ENCODE measurements at regions of chr10 and their contacts with region 1.

Region 1: GRCh38 chr10:103416436-103417147 is 20.2 kb downstream of the PDCD11 start:
- DNase-seq: peak; percentile 44 to 70
- ATAC-seq: peak; percentile 78 to 85; a peak in 4 of 6 replicates
- H3K4me3 ChIP-seq: no peak overlapping the region
- H3K27ac ChIP-seq: no peak overlapping the region
- H3K4me1 ChIP-seq: no peaks in the 10 kb centered on the region
- CTCF ChIP-seq: peak; percentile 74
- EP300 ChIP-seq: no peak
- POLR2A ChIP-seq: no peak
- RAD21 ChIP-seq: peak; percentile 64 to 70

Region 2: DNA sequence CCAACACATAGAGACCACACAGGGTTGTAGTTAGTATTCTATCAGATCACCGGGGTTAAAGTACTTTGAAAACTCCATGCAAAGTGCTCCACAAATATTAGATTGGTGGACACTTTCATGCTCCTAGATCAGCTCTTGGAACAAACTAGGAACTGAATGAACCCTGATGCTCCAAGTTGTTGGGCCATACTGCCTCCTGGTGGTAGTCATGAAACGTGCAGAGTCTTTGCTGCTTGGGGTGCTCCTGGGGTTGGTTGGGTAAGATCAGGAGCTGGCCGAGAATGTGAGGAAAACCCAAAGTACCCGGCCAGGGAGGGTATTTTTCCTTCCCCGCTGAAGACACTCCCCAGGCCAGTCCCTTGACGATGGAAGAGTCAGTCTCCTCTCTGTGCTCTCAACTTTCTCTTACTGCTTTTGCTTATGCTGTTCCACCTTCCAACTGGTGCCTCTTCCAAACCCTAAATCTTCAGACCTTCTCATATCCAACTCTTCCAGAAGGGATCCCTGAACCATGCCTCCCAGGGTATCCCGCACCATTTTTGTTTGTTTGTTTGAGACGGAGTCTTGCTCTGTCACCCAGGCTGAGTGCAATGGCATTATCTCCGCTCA is 171.8 kb before region 1 on chr10:
- CTCF ChIA-PET with region 1: no interaction called
- POLR2A ChIA-PET with region 1: no interaction called
- DNase-seq: peak; percentile 90 to 94
- ATAC-seq: peak; percentile 36 to 57; a peak in 4 of 6 replicates
- H3K4me3 ChIP-seq: no peak overlapping the region
- H3K27ac ChIP-seq: peak overlapping the region; percentile 96 to 100
- H3K4me1 ChIP-seq: peaks cover 40% of the 10 kb centered on the region
- CTCF ChIP-seq: peak; percentile 84
- EP300 ChIP-seq: no peak
- POLR2A ChIP-seq: no peak
- RAD21 ChIP-seq: peak; percentile 95 to 98

Region 3: DNA sequence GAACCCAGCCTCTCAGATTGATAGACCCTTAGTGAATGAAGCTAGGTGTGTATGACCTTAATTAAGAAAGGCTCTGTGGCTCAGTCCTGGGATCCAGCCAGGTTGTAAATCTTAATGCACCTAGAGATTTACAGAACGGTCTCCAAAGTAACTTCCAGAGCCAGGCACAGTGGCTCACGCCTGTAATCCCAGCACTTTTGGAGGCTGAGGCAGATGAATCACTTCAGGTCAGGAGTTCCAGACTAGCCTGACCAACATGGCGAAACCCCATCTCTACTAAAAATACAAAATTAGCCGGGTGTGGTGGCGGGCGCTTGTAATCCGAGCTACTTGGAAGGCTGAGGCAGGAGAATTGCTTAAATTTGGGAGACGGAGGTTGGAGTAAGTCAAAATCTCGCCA is 11.3 kb after region 1 on chr10:
- CTCF ChIA-PET with region 1: interaction called, 37 read pairs
- POLR2A ChIA-PET with region 1: no interaction called
- DNase-seq: no peak
- ATAC-seq: no peak
- H3K4me3 ChIP-seq: no peak overlapping the region
- H3K27ac ChIP-seq: no peak overlapping the region
- H3K4me1 ChIP-seq: peaks cover 7% of the 10 kb centered on the region; the same call in 2 of the 3 replicates
- CTCF ChIP-seq: no peak
- EP300 ChIP-seq: no peak
- POLR2A ChIP-seq: no peak
- RAD21 ChIP-seq: no peak

Region 4: DNA sequence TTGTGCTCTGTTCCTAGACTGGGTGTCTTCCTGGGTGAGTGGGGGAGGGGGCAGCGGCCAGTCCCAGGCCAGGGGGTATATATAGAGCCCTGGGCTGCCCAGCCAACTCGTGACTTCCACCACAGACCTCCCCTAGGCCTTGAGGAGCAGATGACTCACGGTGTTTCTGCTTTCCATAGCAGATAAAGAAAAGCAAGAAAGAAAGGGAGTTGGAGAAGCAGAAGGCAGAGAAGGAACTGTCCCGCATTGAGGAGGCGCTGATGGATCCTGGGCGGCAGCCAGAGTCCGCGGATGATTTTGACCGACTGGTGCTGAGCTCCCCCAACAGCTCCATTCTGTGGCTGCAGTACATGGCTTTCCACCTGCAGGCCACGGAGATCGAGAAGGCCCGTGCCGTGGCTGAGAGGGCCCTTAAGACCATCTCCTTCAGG is 25.5 kb after region 1 on chr10:
- CTCF ChIA-PET with region 1: interaction called, 10 read pairs
- POLR2A ChIA-PET with region 1: interaction called, 3 read pairs
- DNase-seq: no peak
- ATAC-seq: no peak
- H3K4me3 ChIP-seq: no peak overlapping the region
- H3K27ac ChIP-seq: no peak overlapping the region
- H3K4me1 ChIP-seq: no peaks in the 10 kb centered on the region
- CTCF ChIP-seq: no peak
- EP300 ChIP-seq: no peak
- POLR2A ChIP-seq: no peak
- RAD21 ChIP-seq: no peak

Region 5: DNA sequence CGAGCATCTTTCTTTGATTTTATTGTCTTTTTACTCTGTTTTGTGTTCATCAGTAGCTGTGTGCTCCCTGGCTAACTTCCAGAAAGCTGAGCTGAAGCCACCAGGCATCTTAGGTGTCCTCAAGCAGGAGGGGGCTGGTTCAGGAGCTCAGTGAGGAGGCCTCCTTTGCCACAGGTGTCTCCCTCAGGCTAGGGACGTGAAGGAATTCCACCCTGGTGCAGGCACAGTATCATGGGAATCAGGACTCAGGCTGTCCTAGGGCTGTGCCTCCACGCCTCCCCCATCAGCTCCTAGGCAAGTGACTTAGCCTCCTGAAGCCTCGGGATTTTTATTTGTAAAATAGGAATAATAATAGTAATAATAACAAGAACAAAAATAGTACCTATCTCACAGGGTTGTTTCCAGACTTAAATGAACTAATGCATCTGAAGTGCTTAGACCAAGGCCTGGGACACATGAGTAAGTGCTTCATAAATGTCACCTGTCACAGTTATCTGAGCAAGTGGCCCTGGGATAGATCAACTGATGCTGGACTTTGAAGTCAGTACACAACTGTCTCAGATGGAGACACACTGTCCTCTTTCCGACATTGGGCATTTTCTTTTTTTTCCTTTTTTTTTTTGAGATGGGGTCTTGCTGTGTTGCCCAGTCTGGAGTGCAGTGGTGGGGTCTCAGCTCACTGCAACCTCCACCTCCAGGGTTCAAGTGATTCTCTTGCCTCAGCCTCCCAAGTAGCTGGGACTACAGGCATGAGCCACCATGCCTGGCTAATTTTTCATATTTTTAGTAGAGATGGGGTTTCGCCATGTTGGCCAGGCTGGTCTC is 70.0 kb after region 1 on chr10:
- CTCF ChIA-PET with region 1: interaction called, 32 read pairs
- POLR2A ChIA-PET with region 1: no interaction called
- DNase-seq: no peak
- ATAC-seq: no peak
- H3K4me3 ChIP-seq: no peak overlapping the region
- H3K27ac ChIP-seq: no peak overlapping the region
- H3K4me1 ChIP-seq: no peaks in the 10 kb centered on the region
- CTCF ChIP-seq: no peak
- EP300 ChIP-seq: no peak
- POLR2A ChIP-seq: no peak
- RAD21 ChIP-seq: no peak

Region 6: GRCh38 chr10:103592186-103593021 is 175.8 kb after region 1 on chr10:
- CTCF ChIA-PET with region 1: interaction called, 21 read pairs
- POLR2A ChIA-PET with region 1: no interaction called
- DNase-seq: peak; percentile 56 to 94
- ATAC-seq: peak; percentile 80 to 94
- H3K4me3 ChIP-seq: no peak overlapping the region
- H3K27ac ChIP-seq: no peak overlapping the region
- H3K4me1 ChIP-seq: no peaks in the 10 kb centered on the region
- CTCF ChIP-seq: peak; percentile 77
- EP300 ChIP-seq: no peak
- POLR2A ChIP-seq: no peak
- RAD21 ChIP-seq: peak; percentile 76 to 86

Measured in A549 (cell line).